Left colon (tissue), 2 donors: ENCODE measurements at regions of chr9 and their contacts with region 1.

Region 1: GRCh38 chr9:98255578-98256296 is at the start of gene TBC1D2:
- DNase-seq: peak; percentile 96 to 98
- ATAC-seq: peak; percentile 93
- total RNA-seq, gene TBC1D2: 26.0 to 28.3 TPM

Region 2: DNA sequence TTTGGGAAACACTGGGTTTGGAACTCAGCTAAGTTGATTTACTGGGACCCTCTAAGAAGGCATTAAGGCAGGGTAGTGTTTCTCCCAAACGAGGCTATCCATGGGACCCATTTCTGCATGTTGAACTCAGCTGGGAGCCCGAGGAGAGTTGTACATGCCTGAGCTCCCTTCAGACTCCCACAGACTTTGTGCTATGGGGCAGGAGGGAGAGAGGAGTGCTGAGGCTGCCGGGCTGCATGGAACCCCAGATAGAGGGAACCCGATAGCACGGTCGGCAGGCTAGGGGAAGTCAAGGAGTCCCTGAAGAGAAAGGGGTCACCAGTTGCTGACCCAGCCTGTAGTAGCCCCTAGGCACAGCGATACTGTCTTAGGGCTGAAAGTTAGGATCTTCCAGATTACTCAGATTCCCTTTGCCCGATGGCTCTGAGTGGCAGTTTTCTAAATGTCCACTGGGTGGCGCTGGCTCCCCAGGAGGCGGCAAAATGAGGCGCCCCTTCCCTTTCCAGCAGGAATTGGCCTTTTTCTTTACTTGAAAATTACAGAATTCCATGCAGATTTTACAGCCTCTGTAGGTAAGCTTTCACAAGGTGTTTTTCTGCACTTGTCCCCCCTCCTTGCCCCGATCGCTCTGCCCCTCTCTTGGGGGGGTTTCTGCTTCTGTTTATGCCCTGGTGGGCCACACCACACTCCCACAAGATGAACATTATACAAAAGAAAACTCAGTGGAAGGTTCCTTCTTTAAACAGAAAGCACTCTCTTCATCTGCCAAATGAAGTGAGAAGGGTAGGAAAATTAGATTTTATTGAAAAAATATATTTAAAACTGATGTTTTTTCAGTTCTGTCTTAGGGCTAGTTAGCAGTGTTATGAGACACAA is 181.4 kb before region 1 on chr9:
- intact Hi-C with region 1: loop called in 1 of 2 experiments (anchors 10 kb)
- DNase-seq: peak; percentile 52 to 76
- ATAC-seq: peak; percentile 11

Region 3: GRCh38 chr9:98207606-98208005 is 48.1 kb before region 1 on chr9:
- intact Hi-C with region 1: loop called in 1 of 2 experiments (anchors 10 kb)
- DNase-seq: no peak
- ATAC-seq: no peak

Region 4: DNA sequence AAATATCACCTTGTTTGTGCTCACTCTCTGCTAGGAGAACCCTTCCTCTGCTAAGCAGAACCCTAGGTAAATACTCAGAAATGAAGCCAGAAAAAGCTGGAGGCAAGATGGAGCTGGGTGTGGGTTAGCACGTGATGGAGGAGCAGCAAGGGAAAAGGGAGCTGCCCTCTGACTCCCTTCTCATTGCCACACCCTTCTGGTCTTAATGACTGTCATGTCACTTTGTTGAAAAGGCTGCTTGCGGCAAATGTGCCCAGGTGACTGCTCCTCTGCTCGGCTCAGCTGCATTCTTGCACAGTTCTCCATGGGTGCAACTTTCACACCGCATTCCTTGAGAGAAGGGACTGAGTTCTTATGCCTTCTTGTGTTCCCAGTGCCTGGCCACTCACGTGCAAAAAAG is 36.1 kb after region 1 on chr9:
- intact Hi-C with region 1: no loop called
- DNase-seq: no peak
- ATAC-seq: peak; percentile 53